Mammary epithelial cell (primary cell): ENCODE measurements at regions of chr20 and their contacts with region 1.

Region 1: GRCh38 chr20:61628901-61629601 is 377.0 kb downstream of the CDH4 start:
- DNase-seq: peak; percentile 27
- H3K4me3 ChIP-seq: no peak overlapping the region
- H3K27ac ChIP-seq: no peak overlapping the region
- H3K4me1 ChIP-seq: no peaks in the 10 kb centered on the region
- H3K27me3 ChIP-seq: no peaks in the 10 kb centered on the region
- CTCF ChIP-seq: no peak

Region 2: GRCh38 chr20:61560361-61560853 is 68.6 kb before region 1 on chr20:
- CTCF ChIA-PET with region 1: no interaction called
- dilution Hi-C with region 1: loop called (anchors 5 kb)
- in situ Hi-C with region 1: no loop called
- intact Hi-C with region 1: no loop called
- DNase-seq: peak; percentile 6
- H3K4me3 ChIP-seq: no peak overlapping the region
- H3K27ac ChIP-seq: no peak overlapping the region
- H3K4me1 ChIP-seq: peaks cover 13% of the 10 kb centered on the region
- H3K27me3 ChIP-seq: no peaks in the 10 kb centered on the region
- CTCF ChIP-seq: no peak

Region 3: GRCh38 chr20:61659246-61659993 is 30.4 kb after region 1 on chr20:
- CTCF ChIA-PET with region 1: no interaction called
- dilution Hi-C with region 1: no loop called
- in situ Hi-C with region 1: no loop called
- intact Hi-C with region 1: no loop called
- DNase-seq: no peak
- H3K4me3 ChIP-seq: no peak overlapping the region
- H3K27ac ChIP-seq: no peak overlapping the region
- H3K4me1 ChIP-seq: no peaks in the 10 kb centered on the region
- H3K27me3 ChIP-seq: no peaks in the 10 kb centered on the region
- CTCF ChIP-seq: no peak

Region 4: DNA sequence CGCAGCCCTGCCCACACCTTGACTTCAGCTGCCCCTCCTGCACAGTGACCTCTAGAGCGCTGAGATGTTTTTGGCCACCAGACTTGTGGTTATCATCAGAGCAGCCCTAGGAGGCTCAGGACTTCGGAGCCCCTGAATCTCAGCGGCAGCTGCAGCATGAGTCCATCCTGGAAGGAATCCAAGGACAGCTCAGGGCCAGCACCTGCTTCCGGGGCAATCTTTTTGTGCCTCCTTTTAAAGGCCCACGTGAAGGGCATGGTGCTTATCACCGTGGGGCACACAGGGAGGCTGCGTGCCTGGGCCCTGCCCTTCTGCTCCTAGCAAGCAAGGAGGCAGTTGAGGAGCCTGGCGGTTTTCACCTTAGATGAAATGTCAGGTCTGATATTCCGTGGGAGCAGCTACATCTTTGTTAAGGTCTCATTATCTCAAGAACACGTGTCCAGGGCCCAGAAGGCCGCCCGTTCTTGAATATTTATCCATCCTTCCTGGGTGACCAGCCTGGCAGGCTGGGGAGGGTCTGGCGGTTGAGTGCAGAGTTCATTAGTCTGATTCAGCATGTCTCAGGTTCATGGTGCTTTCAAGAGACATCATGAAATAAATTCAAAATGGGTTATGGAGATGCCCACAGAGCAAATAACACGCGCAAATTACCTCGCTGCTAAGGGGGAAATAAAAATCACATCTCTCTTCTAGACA is 44.2 kb after region 1 on chr20:
- CTCF ChIA-PET with region 1: no interaction called
- dilution Hi-C with region 1: loop called (anchors 5 kb)
- in situ Hi-C with region 1: no loop called
- intact Hi-C with region 1: no loop called
- DNase-seq: no peak
- H3K4me3 ChIP-seq: no peak overlapping the region
- H3K27ac ChIP-seq: no peak overlapping the region
- H3K4me1 ChIP-seq: no peaks in the 10 kb centered on the region
- H3K27me3 ChIP-seq: no peaks in the 10 kb centered on the region
- CTCF ChIP-seq: no peak